ENCODE measurements at regions of chr14 and their contacts with region 1.

Region 1: DNA sequence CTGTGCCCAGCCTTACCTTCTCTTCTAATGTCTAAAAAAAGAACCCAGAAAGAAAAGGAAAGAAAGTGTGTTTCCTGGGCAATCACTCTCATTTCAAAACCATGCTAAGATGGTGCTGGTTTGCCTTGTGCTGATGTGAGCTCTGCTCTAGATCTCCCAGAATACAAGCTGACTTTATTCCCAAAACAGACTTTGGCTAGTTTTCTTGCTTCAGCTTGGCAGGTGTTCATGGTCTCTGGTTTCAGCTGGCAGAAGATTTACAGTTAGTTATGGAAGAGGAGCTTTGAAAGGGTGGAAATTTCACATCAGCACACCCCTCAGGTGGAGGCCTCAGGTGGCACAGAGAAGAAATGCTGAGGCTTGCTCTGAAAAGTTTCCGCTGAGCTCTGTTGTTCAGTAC is 34.4 kb downstream of the PPP1R36 start:
- DNase-seq: no peak
- ATAC-seq: no peak
- H3K4me3 ChIP-seq: no peak overlapping the region
- H3K27ac ChIP-seq: no peak overlapping the region
- H3K4me1 ChIP-seq: no peaks in the 10 kb centered on the region
- H3K27me3 ChIP-seq: no peaks in the 10 kb centered on the region
- CTCF ChIP-seq: no peak

Region 2: GRCh38 chr14:64294672-64295413 is 289.3 kb before region 1 on chr14:
- CTCF ChIA-PET with region 1: no interaction called
- POLR2A ChIA-PET with region 1: no interaction called
- intact Hi-C with region 1: no loop called
- DNase-seq: peak; percentile 78
- ATAC-seq: peak; percentile 84
- H3K4me3 ChIP-seq: peak overlapping the region; percentile 66
- H3K27ac ChIP-seq: no peak overlapping the region
- H3K4me1 ChIP-seq: peaks cover 16% of the 10 kb centered on the region; the same call in 1 of the 2 replicates
- H3K27me3 ChIP-seq: no peaks in the 10 kb centered on the region
- CTCF ChIP-seq: peak; percentile 97

Region 3: DNA sequence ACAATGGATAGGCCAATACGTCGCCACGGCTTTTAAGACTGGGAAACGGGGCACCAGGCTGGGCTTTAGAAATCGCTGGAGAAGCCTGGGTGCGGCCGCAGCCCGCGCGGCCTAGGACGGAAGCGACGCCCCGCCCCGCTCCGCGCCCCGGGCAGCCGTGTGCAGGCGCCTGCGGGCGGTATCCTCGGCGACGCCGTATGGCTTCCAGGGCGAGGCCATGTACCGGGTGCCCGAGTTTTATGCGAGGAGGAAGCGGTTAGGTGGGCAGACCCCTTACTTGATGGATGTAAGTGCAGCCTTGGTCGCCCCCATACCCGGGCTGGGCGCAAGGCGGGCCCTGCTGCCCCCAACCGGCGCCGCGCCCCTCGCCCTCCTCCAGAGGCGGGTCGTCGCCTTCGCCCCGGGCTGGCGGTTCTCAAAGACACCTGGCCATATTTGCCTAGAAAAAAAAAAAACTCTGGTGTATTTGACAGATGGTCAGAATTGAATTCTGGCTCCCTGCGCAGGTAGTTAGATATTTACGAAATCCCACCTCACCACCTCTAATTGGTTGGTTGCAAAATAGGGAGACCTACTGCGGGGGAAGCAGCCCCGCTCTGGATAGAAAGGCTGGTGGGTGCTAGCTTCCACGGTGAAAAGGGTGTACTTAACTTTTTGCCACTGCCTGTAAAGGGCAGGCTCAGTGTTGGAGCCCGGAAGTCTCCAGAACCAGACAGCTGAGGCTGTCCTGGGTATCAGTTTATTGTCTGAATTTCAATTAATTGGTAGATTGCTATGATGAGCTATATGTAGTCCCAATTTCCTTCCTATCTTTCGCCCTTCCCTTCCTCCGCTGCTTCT is 34.2 kb before region 1 on chr14 and contains the start of gene PPP1R36:
- CTCF ChIA-PET with region 1: no interaction called
- POLR2A ChIA-PET with region 1: interaction called, 19 read pairs
- intact Hi-C with region 1: no loop called
- DNase-seq: no peak
- ATAC-seq: no peak
- H3K4me3 ChIP-seq: no peak within 1 kb of the TSS
- H3K27ac ChIP-seq: no peak within 1 kb of the TSS
- H3K4me1 ChIP-seq: no peaks in the 10 kb centered on the region
- H3K27me3 ChIP-seq: no peaks in the 10 kb centered on the region
- CTCF ChIP-seq: no peak
- total RNA-seq, gene PPP1R36: 0.26 TPM in 1 of 2 replicates, not detected in the other

Region 4: DNA sequence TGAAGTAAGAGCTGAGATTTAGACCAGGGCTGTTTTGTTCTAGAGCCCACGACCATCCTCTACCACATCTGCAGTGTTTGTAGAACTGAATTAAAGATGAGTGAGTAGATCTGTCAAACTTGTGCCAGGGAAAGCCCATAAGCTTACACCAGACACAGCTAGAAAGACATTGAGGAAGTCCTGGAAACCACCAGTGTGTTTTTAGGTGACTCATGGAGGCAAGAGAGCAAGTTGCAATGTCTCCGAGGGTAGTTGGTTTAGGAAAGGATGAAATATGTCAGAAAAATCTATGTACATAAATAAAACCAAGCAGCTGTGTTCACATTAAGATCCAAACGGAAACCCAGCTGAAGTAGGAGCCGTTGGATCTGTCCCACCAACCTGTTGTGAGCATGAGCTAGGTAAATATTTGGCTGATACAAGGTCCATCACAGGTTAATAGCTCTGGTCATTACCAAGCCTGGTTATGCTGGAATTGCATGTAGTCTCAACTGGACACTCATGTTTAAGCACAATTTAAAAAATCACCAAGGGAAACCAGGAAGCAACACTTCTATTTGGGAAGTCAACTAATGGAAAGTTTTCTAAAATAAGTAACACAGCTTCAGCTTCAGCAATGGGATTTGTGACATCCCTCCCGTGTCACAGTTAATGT is 70.2 kb after region 1 on chr14:
- CTCF ChIA-PET with region 1: interaction called, 12 read pairs
- POLR2A ChIA-PET with region 1: no interaction called
- intact Hi-C with region 1: no loop called
- DNase-seq: peak; percentile 90
- ATAC-seq: peak; percentile 98
- H3K4me3 ChIP-seq: peak overlapping the region; percentile 6; the same call in 1 of the 2 replicates
- H3K27ac ChIP-seq: peak overlapping the region; percentile 68
- H3K4me1 ChIP-seq: peaks cover 17% of the 10 kb centered on the region
- H3K27me3 ChIP-seq: no peaks in the 10 kb centered on the region
- CTCF ChIP-seq: no peak